ENCODE measurements at regions of chr15 and their contacts with region 1.

Region 1: DNA sequence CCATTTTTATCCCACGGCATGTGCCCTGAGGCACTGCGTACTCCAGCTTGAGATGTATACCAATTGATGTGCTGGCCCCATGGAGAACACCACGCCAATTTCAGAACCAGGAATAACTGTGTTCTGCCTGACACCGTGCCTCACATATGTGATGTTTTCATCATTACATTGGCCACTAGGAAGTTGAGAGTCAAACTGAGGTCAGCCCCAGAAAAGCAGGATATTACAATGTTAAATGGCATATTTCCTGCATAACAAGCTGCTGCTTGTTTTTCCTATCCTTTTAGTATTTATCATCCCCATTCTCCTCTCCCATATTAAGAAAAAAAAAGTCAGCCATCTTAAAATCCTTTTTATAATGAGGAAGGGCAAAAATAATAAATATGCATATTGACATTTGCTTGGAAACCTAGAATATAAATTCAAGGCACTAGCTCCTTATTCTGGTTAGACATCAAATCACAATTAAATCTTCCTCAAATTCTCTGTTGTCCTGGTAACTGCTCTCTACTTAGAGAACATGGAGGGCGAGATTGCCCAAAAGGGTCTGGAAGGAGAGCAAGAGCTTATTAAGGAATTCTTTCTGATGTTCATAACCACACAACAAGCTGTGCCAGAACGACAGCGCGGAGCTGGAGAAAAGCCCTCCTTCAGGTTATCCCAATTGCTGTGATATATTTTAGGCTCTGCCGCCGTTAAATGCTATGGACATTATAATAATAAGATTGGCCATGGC is 112.6 kb downstream of the UACA start:
- DNase-seq: no peak
- H3K4me3 ChIP-seq: no peak overlapping the region
- H3K27ac ChIP-seq: no peak overlapping the region
- H3K4me1 ChIP-seq: no peaks in the 10 kb centered on the region
- H3K27me3 ChIP-seq: no peaks in the 10 kb centered on the region
- CTCF ChIP-seq: no peak

Region 2: GRCh38 chr15:69830430-69830829 is 820.3 kb before region 1 on chr15:
- CTCF ChIA-PET with region 1: no interaction called
- POLR2A ChIA-PET with region 1: interaction called, 16 read pairs
- intact Hi-C with region 1: no loop called
- DNase-seq: no peak
- H3K4me3 ChIP-seq: no peak overlapping the region
- H3K27ac ChIP-seq: no peak overlapping the region
- H3K4me1 ChIP-seq: 0 out of 2 replicates have a peak, but pooled peaks cover 6% of the 10 kb centered on the region
- H3K27me3 ChIP-seq: no peaks in the 10 kb centered on the region
- CTCF ChIP-seq: no peak

Region 3: GRCh38 chr15:70569091-70569621 is 81.6 kb before region 1 on chr15:
- CTCF ChIA-PET with region 1: no interaction called
- POLR2A ChIA-PET with region 1: interaction called, 10 read pairs
- intact Hi-C with region 1: no loop called
- DNase-seq: peak in 1 of 2 experiments; percentile 56
- H3K4me3 ChIP-seq: no peak overlapping the region
- H3K27ac ChIP-seq: peak overlapping the region; percentile 49
- H3K4me1 ChIP-seq: peaks cover 24% of the 10 kb centered on the region
- H3K27me3 ChIP-seq: no peaks in the 10 kb centered on the region
- CTCF ChIP-seq: peak; percentile 31; the same call in 1 of the 2 replicates

Measured in PC-9 (cell line).